Activated CD8-positive, alpha-beta T cell treated with anti-CD3 and anti-CD28 coated beads for 36 hours (primary cell): ENCODE measurements at regions of chr16 and their contacts with region 1.

Region 1: DNA sequence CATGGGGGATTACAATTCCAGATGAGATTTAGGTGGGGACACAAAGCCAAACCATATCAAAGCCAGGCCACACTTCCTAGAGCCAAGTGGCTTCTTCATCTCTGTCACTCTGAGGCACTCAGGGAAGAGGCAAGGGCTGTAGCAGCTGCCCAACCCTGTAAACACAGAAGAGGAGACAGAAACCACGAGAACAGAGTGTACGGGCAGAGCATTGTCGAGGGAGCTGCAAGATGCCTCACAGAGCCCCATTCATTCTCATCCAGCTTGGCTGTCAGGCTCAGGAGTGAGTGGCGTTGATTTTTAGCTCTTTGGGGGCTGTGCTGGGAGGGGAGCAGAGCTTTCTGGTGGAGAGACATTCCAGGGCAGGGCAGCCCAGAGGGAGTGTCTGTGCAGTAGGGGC is 117.2 kb upstream of the SALL1 start:
- DNase-seq: no peak
- ATAC-seq: no peak
- H3K4me3 Mint-ChIP-seq: no peak overlapping the region
- H3K27ac Mint-ChIP-seq: no peak overlapping the region
- H3K4me1 Mint-ChIP-seq: no peaks in the 10 kb centered on the region
- H3K27me3 Mint-ChIP-seq: no peaks in the 10 kb centered on the region
- CTCF ChIP-seq: no peak

Region 2: DNA sequence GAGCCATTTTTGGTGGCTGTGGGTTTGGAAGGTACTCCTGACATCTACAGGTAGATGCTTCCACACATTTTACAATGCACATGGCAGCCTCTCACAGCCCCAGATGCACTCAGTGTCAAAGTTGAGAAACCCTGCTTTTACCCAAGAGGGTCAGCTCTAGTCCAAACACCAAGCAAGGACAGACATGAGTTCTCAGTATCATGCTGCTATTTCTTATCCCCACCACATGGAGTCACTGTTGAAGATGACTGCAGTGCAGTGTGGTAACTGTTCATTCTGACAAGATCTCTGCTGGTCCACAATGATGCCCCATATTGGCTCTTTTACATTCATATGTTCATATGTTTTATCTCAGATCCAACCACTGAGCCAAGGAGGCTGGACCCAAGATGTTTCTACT is 66.6 kb before region 1 on chr16:
- CTCF ChIA-PET with region 1: no interaction called
- POLR2A ChIA-PET with region 1: no interaction called
- intact Hi-C with region 1: loop called (anchors 10 kb)
- DNase-seq: no peak
- ATAC-seq: no peak
- H3K4me3 Mint-ChIP-seq: no peak overlapping the region
- H3K27ac Mint-ChIP-seq: no peak overlapping the region
- H3K4me1 Mint-ChIP-seq: no peaks in the 10 kb centered on the region
- H3K27me3 Mint-ChIP-seq: no peaks in the 10 kb centered on the region
- CTCF ChIP-seq: no peak

Region 3: DNA sequence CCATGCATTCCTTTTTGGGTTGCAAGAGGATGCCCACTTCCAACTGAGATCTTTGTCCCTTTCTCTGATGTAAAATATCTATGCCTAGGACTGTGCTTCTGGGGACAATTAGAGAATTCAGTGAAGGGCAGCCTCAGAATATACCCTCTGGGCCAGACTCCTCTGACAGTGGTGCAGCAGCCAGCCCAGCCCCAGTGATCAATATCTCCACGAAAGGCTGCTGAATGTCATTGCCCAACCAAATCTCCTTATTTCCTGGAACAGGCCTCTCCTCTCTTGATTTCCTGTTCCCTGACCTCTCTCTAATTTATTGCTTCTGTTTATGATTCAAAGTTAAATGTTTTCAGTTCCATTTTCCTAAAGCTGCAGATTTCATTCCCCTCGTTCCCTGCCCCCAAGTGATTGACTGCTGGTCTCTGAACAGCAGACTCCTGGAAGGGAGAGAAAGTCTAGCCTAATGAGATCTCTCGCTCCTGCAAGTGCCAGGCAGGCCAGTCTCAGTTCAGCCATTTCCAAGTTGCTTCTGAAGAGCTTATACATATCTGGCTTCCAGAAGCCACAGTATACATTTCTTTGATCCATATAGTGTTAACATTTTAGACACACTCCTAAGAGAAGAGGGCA is 12.8 kb before region 1 on chr16:
- CTCF ChIA-PET with region 1: no interaction called
- POLR2A ChIA-PET with region 1: no interaction called
- intact Hi-C with region 1: no loop called
- DNase-seq: no peak
- ATAC-seq: no peak
- H3K4me3 Mint-ChIP-seq: no peak overlapping the region
- H3K27ac Mint-ChIP-seq: no peak overlapping the region
- H3K4me1 Mint-ChIP-seq: no peaks in the 10 kb centered on the region
- H3K27me3 Mint-ChIP-seq: no peaks in the 10 kb centered on the region
- CTCF ChIP-seq: no peak

Region 4: DNA sequence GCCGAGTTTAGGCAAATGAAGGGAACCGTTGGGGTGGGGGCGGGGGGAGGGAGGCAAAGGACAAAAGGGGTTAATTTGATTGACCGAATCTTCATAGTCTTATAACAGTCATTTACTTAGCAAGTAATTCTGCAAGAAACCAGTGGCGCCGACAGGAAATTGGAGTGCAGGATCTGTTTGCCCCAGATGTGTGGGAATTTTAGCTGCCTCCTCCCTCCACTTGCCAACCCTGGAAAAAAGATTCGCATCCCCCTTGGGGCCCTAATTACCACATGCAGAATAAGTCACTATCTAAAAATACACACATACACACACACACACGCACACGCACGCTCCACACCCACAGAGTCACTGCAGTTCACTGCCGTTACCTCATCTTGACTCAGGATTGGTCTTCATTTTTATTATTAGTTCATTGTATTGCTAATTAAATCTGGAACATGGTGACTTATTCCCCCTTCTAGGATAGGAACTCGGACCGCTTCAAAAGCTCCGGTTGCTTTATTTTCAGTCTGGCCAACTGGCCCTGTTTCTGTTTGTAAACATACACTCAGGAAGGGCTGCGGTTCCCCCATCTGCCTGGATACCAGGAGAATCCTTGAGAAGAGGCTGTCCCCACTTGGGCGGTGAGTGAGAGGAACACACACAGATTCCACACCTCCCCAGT is 124.4 kb after region 1 on chr16:
- CTCF ChIA-PET with region 1: no interaction called
- POLR2A ChIA-PET with region 1: no interaction called
- intact Hi-C with region 1: no loop called
- DNase-seq: no peak
- ATAC-seq: no peak
- H3K4me3 Mint-ChIP-seq: no peak overlapping the region
- H3K27ac Mint-ChIP-seq: no peak overlapping the region
- H3K4me1 Mint-ChIP-seq: no peaks in the 10 kb centered on the region
- H3K27me3 Mint-ChIP-seq: peaks cover 2% of the 10 kb centered on the region
- CTCF ChIP-seq: no peak